ENCODE measurements at regions of chr20 and their contacts with region 1.

Region 1: GRCh38 chr20:32249030-32249738 is 28.3 kb upstream of the KIF3B start:
- DNase-seq: peak; percentile 61
- H3K4me3 Mint-ChIP-seq: peak overlapping the region; percentile 45
- H3K27ac Mint-ChIP-seq: peak overlapping the region; percentile 96
- H3K4me1 Mint-ChIP-seq: peaks cover 54% of the 10 kb centered on the region
- H3K27me3 Mint-ChIP-seq: no peaks in the 10 kb centered on the region

Region 2: GRCh38 chr20:32168184-32168905 is 80.8 kb before region 1 on chr20:
- CTCF ChIA-PET with region 1: no interaction called
- intact Hi-C with region 1: no loop called
- DNase-seq: no peak
- H3K4me3 Mint-ChIP-seq: no peak overlapping the region
- H3K27ac Mint-ChIP-seq: no peak overlapping the region
- H3K4me1 Mint-ChIP-seq: no peaks in the 10 kb centered on the region
- H3K27me3 Mint-ChIP-seq: no peaks in the 10 kb centered on the region

Region 3: GRCh38 chr20:32231847-32232246 is 17.3 kb before region 1 on chr20:
- CTCF ChIA-PET with region 1: interaction called, 5 read pairs
- intact Hi-C with region 1: loop called (anchors 1 kb)
- DNase-seq: peak; percentile 75
- H3K4me3 Mint-ChIP-seq: peak overlapping the region; percentile 47
- H3K27ac Mint-ChIP-seq: peak overlapping the region; percentile 99
- H3K4me1 Mint-ChIP-seq: peaks cover 39% of the 10 kb centered on the region
- H3K27me3 Mint-ChIP-seq: no peaks in the 10 kb centered on the region

Region 4: DNA sequence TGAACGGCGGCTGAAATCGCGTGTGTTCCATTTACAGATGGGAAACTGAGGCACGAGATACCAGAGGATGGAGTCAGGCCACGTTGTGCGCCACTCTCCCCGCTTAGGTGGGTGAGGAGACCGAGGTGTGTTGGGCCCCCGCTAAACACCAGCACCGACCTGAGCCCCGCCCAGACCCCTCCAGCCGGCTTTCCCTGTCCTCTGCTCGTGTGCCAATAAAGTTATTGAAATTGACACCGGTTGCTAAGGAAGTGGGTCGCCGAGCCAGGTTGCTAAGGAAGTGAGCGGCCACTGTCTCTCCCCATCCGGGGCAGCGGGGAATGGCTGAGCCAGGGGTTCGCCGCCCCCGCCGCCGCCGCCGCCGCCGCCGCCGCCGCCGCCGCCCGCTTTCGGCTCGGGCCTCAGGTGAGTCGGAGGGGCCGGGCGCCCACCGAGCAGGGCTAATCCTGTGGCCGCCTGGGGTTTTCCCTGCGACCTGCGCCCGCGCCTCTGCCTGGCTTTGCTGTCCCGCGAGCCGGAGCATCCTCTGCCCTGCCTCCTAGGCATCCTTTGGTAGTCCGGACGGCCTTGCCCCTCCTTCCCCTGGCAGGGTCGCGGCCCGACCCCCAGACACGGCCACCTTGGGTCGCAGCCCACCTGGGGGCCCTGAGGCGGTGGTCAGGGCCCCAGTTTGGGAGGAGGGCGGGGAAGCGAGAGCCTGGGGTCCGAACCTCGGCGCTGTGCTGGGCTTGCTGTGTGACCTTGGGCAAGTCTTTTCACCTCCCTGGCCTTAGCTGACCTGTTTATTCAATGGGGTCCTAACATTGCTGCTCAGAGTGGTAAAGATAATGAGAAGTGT is 28.4 kb after region 1 on chr20 and contains the start of gene KIF3B:
- CTCF ChIA-PET with region 1: no interaction called
- intact Hi-C with region 1: loop called (anchors 1 kb)
- DNase-seq: peak; percentile 91
- H3K4me3 Mint-ChIP-seq: peak within 1 kb of the TSS; percentile 89
- H3K27ac Mint-ChIP-seq: peak within 1 kb of the TSS; percentile 89
- H3K4me1 Mint-ChIP-seq: peaks cover 43% of the 10 kb centered on the region
- H3K27me3 Mint-ChIP-seq: no peaks in the 10 kb centered on the region
- total RNA-seq, gene KIF3B: 27.4 to 27.6 TPM

Region 5: DNA sequence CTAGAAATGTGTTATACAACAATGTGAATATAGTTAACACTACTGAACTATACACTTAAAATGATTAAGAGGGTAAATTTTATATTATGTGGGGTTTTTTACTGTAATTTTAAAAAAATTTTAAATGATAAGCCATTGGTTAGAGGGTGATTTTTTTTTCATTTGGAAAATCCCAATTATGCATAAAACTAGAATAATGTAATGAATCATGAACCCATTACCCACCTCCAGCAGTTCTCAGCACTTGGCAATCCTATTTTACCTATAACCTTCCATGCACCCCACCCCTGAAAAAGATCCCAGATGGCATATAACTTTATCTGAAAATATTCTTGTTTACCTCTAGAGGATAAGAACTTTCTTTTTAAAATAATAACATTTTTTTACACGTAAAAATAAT is 42.0 kb after region 1 on chr20:
- CTCF ChIA-PET with region 1: interaction called, 5 read pairs
- intact Hi-C with region 1: loop called (anchors 1 kb)
- DNase-seq: peak; percentile 14
- H3K4me3 Mint-ChIP-seq: no peak overlapping the region
- H3K27ac Mint-ChIP-seq: peak overlapping the region; percentile 85
- H3K4me1 Mint-ChIP-seq: peaks cover 73% of the 10 kb centered on the region
- H3K27me3 Mint-ChIP-seq: no peaks in the 10 kb centered on the region

Region 6: GRCh38 chr20:32966881-32967781 is 717.9 kb after region 1 on chr20:
- CTCF ChIA-PET with region 1: no interaction called
- intact Hi-C with region 1: loop called (anchors 10 kb)
- DNase-seq: peak; percentile 86
- H3K4me3 Mint-ChIP-seq: peak overlapping the region; percentile 57
- H3K27ac Mint-ChIP-seq: no peak overlapping the region
- H3K4me1 Mint-ChIP-seq: peaks cover 76% of the 10 kb centered on the region
- H3K27me3 Mint-ChIP-seq: no peaks in the 10 kb centered on the region